Activated naive CD4-positive, alpha-beta T cell treated with anti-CD3 and anti-CD28 coated beads for 36 hours (primary cell): ENCODE measurements at regions of chr20 and their contacts with region 1.

Region 1: GRCh38 chr20:33810885-33811777 is at the start of gene CHMP4B:
- DNase-seq: peak; percentile 99
- H3K4me3 Mint-ChIP-seq: peak within 1 kb of the TSS; percentile 87
- H3K27ac Mint-ChIP-seq: peak within 1 kb of the TSS; percentile 87
- H3K4me1 Mint-ChIP-seq: peaks cover 42% of the 10 kb centered on the region
- H3K27me3 Mint-ChIP-seq: no peaks in the 10 kb centered on the region
- total RNA-seq, gene CHMP4B: 68.9 to 69.7 TPM

Region 2: GRCh38 chr20:33554914-33555420 is 256.2 kb before region 1 on chr20:
- CTCF ChIA-PET with region 1: no interaction called
- intact Hi-C with region 1: loop called (anchors 2 kb)
- DNase-seq: peak; percentile 46
- H3K4me3 Mint-ChIP-seq: peak overlapping the region; percentile 21
- H3K27ac Mint-ChIP-seq: peak overlapping the region; percentile 90
- H3K4me1 Mint-ChIP-seq: peaks cover 30% of the 10 kb centered on the region
- H3K27me3 Mint-ChIP-seq: no peaks in the 10 kb centered on the region

Region 3: GRCh38 chr20:33731693-33732165 is 79.4 kb before region 1 on chr20 and contains the start of gene ZNF341:
- CTCF ChIA-PET with region 1: no interaction called
- intact Hi-C with region 1: loop called (anchors 1 kb)
- DNase-seq: peak; percentile 89
- H3K4me3 Mint-ChIP-seq: peak within 1 kb of the TSS; percentile 79
- H3K27ac Mint-ChIP-seq: peak within 1 kb of the TSS; percentile 90
- H3K4me1 Mint-ChIP-seq: peaks cover 18% of the 10 kb centered on the region
- H3K27me3 Mint-ChIP-seq: no peaks in the 10 kb centered on the region
- total RNA-seq, gene ZNF341: 5.8 to 6.8 TPM

Region 4: GRCh38 chr20:33785503-33785902 is 25.6 kb before region 1 on chr20:
- CTCF ChIA-PET with region 1: no interaction called
- intact Hi-C with region 1: no loop called
- DNase-seq: no peak
- H3K4me3 Mint-ChIP-seq: no peak overlapping the region
- H3K27ac Mint-ChIP-seq: no peak overlapping the region
- H3K4me1 Mint-ChIP-seq: no peaks in the 10 kb centered on the region
- H3K27me3 Mint-ChIP-seq: no peaks in the 10 kb centered on the region

Region 5: DNA sequence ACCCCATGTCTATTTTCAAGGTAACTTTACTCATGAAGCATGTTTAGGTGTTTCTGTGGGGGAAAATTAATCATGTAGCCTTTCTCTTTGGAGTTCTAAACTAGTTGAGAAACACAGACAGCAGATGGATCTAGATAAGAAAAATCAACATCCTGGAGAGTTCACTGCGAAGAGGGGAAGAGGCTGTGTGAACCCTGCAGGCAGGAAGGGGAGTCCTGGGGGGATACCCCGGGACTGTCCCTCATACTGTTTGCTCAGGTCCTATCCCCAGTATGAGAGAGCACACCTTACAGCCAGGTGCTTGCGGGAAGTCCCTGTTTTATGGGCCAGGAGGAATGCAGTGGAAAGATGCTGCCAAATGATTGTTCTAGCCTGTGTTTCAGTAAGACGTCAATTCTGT is 32.7 kb after region 1 on chr20:
- CTCF ChIA-PET with region 1: interaction called, 3 read pairs
- intact Hi-C with region 1: loop called (anchors 1 kb)
- DNase-seq: peak; percentile 71
- H3K4me3 Mint-ChIP-seq: no peak overlapping the region
- H3K27ac Mint-ChIP-seq: no peak overlapping the region
- H3K4me1 Mint-ChIP-seq: peaks cover 78% of the 10 kb centered on the region
- H3K27me3 Mint-ChIP-seq: no peaks in the 10 kb centered on the region

Region 6: DNA sequence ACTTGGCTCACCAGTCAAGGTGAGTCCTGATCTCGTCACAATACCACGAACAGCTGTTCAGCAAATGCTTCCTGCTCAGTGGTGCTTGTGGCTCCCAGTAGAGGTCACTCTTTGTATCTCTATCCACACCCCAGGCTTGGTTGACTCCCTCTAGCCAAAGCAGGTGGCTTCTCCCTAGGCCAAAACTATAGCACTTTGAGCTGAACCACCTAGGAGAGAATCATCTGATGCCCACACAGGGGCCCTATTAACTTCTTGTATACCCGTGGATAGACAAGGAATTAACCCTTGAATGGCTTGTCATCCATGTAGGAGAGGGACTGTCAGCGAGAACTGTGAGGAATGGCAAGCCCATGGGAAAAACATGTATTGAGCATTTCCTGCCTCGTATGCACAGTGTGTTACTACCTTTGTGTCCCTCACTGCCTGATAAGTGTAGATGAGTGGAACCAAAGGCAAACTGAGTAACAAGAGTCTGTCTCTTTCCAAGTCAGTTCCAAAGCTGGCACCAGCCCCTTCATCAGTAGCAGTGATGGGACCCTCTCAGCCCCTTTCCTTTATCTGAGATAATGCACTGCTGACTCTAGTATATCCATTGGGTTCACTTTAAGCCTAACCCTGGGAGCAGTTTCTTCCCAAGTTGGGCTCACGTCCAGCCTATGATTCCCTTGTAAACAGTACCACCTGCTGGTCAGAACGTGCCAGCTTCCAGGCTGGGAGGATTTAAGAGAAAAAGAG is 258.4 kb after region 1 on chr20:
- CTCF ChIA-PET with region 1: no interaction called
- intact Hi-C with region 1: no loop called
- DNase-seq: peak; percentile 72
- H3K4me3 Mint-ChIP-seq: no peak overlapping the region
- H3K27ac Mint-ChIP-seq: no peak overlapping the region
- H3K4me1 Mint-ChIP-seq: peaks cover 28% of the 10 kb centered on the region
- H3K27me3 Mint-ChIP-seq: no peaks in the 10 kb centered on the region

Region 7: DNA sequence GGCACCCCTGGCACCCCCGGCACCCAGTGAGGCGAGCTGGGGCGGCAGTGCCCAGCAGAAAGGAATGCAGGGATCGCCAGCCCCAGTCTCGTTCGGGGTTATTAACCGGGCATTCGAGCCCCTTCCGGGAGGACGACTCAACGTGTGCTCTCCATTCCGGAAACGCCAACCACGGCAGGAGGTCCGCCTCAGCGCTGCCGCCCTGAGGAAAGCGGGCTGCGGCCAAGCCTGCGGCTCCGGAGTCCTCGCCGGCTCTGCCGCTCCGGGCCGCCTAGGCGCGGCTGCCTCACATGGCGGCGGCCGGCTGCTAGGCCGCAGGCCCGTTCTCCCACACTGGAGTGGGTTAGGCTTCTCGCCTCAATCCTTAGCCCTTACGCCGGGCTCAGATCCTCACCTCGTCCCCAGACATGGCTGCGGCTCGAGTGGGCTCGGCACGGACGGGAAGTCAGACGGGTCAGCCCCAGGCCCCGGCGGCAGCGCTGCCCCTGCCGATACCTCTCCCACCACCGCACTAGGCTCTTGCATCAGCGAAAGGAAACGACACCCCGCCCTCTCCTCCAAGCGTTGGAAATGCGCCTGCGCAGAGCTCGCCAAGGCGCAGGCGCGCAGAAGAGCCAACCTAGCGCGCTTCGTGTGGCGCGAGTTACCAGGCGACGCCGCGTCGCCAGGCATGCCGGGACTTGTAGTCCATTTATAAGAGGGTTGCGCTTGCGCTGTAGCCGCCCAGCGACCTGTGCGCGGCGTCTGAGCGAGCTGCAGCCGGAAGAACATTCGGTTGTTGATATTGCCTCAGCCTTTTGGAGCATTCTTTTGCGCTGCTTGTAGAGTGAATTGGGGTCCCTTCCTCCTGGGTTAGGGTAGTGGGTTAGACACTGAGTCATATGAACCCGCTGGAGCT is 300.8 kb after region 1 on chr20 and contains the start of gene EIF2S2:
- CTCF ChIA-PET with region 1: no interaction called
- intact Hi-C with region 1: loop called (anchors 1 kb)
- DNase-seq: peak; percentile 97
- H3K4me3 Mint-ChIP-seq: peak within 1 kb of the TSS; percentile 96
- H3K27ac Mint-ChIP-seq: peak within 1 kb of the TSS; percentile 93
- H3K4me1 Mint-ChIP-seq: peaks cover 38% of the 10 kb centered on the region
- H3K27me3 Mint-ChIP-seq: no peaks in the 10 kb centered on the region
- total RNA-seq, gene EIF2S2: 202 to 207 TPM

Region 8: DNA sequence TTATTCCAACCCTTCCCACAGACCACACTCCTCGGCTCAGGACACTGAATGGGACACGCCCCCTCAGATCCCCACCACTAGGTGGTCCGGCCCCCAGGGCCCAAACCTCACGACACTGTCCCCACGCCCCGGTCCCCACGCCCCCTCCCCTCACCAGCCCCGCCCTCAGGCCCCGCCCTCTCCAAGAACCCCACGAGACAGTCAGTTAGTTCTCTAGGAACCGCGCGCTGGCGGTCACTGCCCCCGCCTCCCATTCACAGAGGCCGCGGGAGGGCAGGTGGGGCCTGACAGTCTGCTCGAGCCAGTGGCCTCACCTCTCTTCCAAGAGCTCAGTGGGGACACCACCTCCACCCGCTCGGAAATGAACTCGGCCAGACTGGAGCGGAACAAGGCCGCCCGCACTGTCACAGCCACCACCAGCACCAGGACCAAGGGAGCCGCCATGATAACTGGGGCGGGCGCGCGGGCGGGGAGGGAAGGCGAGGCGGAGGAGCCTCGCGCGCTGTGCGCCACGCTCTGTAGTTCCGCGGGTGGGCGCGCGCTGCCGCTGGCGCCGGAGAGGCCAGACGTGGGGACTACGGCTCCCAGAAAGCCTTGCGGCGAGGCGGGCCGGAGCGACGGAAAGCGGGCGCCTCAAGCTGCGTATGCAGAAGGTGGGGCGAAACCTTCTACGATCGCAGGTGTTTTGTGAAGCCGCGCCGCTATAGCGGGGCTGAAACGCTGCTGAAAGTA is 865.7 kb after region 1 on chr20 and contains the start of gene PIGU:
- CTCF ChIA-PET with region 1: no interaction called
- intact Hi-C with region 1: loop called (anchors 5 kb)
- DNase-seq: peak; percentile 97
- H3K4me3 Mint-ChIP-seq: peak within 1 kb of the TSS; percentile 97
- H3K27ac Mint-ChIP-seq: peak within 1 kb of the TSS; percentile 90
- H3K4me1 Mint-ChIP-seq: peaks cover 29% of the 10 kb centered on the region
- H3K27me3 Mint-ChIP-seq: no peaks in the 10 kb centered on the region
- total RNA-seq, gene PIGU: 18.8 to 18.9 TPM